ENCODE measurements at regions of chr1 and their contacts with region 1.

Region 1: GRCh38 chr1:41728403-41729202 is 190.1 kb downstream of the HIVEP3 start:
- DNase-seq: peak; percentile 25 to 79 (median 76)
- H3K4me3 ChIP-seq: no peak overlapping the region
- H3K27ac ChIP-seq: no peak overlapping the region
- H3K4me1 ChIP-seq: peaks cover 10 to 67% (median 43%) of the 10 kb centered on the region in 4 experiments
- H3K27me3 ChIP-seq: peaks cover 0 to 2% (median 0%) of the 10 kb centered on the region in 5 experiments

Region 2: GRCh38 chr1:41568204-41568603 is 160.4 kb before region 1 on chr1:
- CTCF ChIA-PET with region 1: no interaction called
- POLR2A ChIA-PET with region 1: no interaction called
- DNase-seq: no peak
- H3K4me3 ChIP-seq: no peak overlapping the region
- H3K27ac ChIP-seq: no peak overlapping the region
- H3K4me1 ChIP-seq: no peaks in the 10 kb centered on the region
- H3K27me3 ChIP-seq: no peaks in the 10 kb centered on the region

Region 3: GRCh38 chr1:41739061-41739955 is 10.7 kb after region 1 on chr1:
- CTCF ChIA-PET with region 1: interaction called, 31 read pairs
- POLR2A ChIA-PET with region 1: interaction called, 8 read pairs
- DNase-seq: peak; percentile 88 to 98 (median 98)
- H3K4me3 ChIP-seq: peak overlapping the region in 6 of 7 experiments; percentile 29 to 67 (median 56)
- H3K27ac ChIP-seq: peak overlapping the region; percentile 67 to 82
- H3K4me1 ChIP-seq: peaks cover 11 to 75% (median 60%) of the 10 kb centered on the region in 4 experiments
- H3K27me3 ChIP-seq: no peaks in the 10 kb centered on the region